IMR-90 (cell line): ENCODE measurements at regions of chr2 and their contacts with region 1.

Region 1: GRCh38 chr2:12057436-12058166 is 311.2 kb downstream of the LPIN1 start:
- DNase-seq: no peak
- ATAC-seq: no peak
- H3K4me3 ChIP-seq: no peak overlapping the region
- H3K27ac ChIP-seq: no peak overlapping the region
- H3K4me1 ChIP-seq: peaks cover 13% of the 10 kb centered on the region
- H3K27me3 ChIP-seq: no peaks in the 10 kb centered on the region
- CTCF ChIP-seq: no peak
- POLR2A ChIP-seq: no peak
- RAD21 ChIP-seq: no peak

Region 2: DNA sequence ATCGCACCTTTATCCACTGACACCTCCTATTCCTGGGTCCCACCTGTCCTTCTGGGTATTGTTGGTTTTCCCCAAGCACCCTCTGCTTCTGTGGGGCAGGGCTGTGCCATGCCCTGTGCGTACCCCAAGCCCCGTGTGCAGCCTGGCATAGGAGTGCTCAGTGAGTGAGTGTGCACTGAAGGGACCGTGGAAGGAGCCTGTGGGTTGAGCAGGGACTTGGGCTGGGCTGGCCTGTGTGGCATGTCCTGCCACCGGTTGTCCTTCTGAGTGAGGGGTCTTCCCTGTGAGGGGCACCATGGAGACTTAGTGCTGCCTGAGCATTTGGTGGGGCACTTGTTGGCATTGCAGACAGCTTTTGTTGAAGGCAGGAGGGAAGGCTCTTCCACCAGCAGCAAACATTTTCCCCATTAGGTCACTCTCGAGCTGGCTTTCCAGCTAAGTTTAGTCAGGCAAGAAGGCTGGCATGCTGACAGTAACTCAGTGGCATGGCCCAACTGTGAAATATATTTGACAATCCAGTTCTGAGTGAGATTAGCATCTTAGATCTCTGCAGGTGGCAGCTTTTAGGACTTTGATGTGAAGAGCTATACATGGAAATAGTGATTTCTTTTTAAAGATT is 246.5 kb before region 1 on chr2:
- CTCF ChIA-PET with region 1: no interaction called
- POLR2A ChIA-PET with region 1: no interaction called
- dilution Hi-C with region 1: no loop called
- in situ Hi-C with region 1: no loop called
- intact Hi-C with region 1: no loop called
- DNase-seq: no peak
- ATAC-seq: no peak
- H3K4me3 ChIP-seq: no peak overlapping the region
- H3K27ac ChIP-seq: no peak overlapping the region
- H3K4me1 ChIP-seq: peaks cover 2% of the 10 kb centered on the region; the same call in 1 of the 2 replicates
- H3K27me3 ChIP-seq: no peaks in the 10 kb centered on the region
- CTCF ChIP-seq: no peak
- POLR2A ChIP-seq: no peak
- RAD21 ChIP-seq: no peak

Region 3: GRCh38 chr2:12091201-12091806 is 33.7 kb after region 1 on chr2:
- CTCF ChIA-PET with region 1: no interaction called
- POLR2A ChIA-PET with region 1: no interaction called
- dilution Hi-C with region 1: no loop called
- in situ Hi-C with region 1: no loop called
- intact Hi-C with region 1: no loop called
- DNase-seq: no peak
- ATAC-seq: no peak
- H3K4me3 ChIP-seq: no peak overlapping the region
- H3K27ac ChIP-seq: no peak overlapping the region
- H3K4me1 ChIP-seq: no peaks in the 10 kb centered on the region
- H3K27me3 ChIP-seq: no peaks in the 10 kb centered on the region
- CTCF ChIP-seq: no peak
- POLR2A ChIP-seq: no peak
- RAD21 ChIP-seq: no peak

Region 4: DNA sequence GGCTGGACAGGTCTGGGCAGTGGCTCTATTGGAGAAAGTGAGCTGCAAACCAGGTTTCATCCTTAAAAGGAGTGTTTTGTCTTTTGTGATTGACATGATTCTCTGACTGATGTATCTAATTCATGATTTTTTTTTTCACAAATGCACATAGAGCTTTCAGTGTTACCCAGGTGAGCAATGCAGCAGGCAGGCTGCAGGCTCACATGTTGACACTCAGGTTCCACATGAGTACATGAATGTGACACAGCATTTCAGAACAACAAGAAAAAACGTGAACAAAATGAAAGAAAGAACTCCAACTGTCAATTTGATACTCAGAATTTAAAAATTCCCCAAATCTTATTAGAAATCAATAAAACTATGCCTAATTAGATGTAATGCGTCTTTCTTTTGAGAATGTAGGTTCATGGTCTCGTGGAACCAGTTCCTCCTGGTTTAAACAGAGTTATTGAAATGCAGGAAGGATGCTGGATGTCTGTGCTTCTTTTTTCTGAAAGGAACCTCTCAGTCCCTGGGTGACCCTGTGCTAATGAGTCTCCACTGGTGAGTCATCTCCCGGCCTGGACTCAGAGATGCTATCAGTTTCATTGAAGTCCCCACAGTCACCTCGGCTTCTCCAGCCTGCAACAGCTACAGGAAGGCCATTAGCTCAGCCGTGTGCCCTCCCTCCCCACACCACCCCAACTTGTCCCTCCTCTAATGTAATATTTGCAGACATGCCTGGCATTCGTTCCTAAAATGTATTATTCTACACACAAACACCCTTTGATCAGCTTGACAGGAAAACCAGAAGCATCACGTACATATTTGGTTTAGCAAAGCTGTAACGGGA is 119.2 kb after region 1 on chr2:
- CTCF ChIA-PET with region 1: no interaction called
- POLR2A ChIA-PET with region 1: no interaction called
- dilution Hi-C with region 1: no loop called
- in situ Hi-C with region 1: no loop called
- intact Hi-C with region 1: loop called (anchors 10 kb)
- DNase-seq: peak; percentile 76
- ATAC-seq: peak; percentile 87
- H3K4me3 ChIP-seq: no peak overlapping the region
- H3K27ac ChIP-seq: no peak overlapping the region; the same call in 1 of the 2 replicates
- H3K4me1 ChIP-seq: peaks cover 11% of the 10 kb centered on the region
- H3K27me3 ChIP-seq: no peaks in the 10 kb centered on the region
- CTCF ChIP-seq: no peak
- POLR2A ChIP-seq: no peak
- RAD21 ChIP-seq: no peak

Region 5: DNA sequence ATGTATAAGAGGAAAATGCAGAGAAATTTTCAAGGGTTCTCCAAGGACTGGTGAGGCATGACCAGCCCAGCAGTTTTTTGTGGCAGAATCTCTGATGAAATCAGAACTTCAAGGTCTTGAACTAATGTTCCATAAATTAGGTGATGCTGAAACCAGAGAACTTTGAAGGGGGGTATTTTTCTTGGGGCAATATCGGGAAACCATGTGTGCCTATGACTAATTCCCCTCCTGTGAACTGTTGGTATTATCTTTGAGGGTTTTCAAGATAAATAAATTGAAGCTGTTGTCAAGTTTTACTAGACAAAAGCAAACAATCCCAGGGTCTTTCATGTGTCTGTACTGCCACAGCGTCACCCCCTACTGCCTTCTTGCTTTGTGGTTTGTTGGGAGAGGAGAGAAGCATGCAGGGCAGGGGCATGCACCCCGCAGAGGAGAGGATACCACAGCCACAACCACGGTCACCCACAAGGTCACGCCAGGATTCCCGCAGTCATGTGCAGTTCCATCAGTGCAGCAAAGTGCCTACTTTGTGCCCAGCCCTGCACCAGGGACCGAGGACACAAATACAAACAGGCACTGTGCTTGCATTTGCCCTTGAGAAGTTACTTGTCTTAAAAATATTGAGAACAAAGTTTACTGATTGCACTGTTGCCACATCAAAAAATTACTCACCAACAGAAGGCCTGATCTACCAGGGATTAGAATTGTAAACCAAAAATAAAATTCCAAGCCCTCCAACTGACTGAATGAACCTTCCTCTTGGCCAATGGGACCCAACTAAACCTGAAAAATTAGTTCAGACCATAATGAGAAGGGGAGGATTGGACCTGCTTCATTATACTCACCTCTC is 245.8 kb after region 1 on chr2:
- CTCF ChIA-PET with region 1: no interaction called
- POLR2A ChIA-PET with region 1: no interaction called
- dilution Hi-C with region 1: no loop called
- in situ Hi-C with region 1: no loop called
- intact Hi-C with region 1: loop called (anchors 10 kb)
- DNase-seq: peak; percentile 83
- ATAC-seq: peak; percentile 69
- H3K4me3 ChIP-seq: no peak overlapping the region
- H3K27ac ChIP-seq: peak overlapping the region; percentile 53
- H3K4me1 ChIP-seq: peaks cover 15% of the 10 kb centered on the region
- H3K27me3 ChIP-seq: no peaks in the 10 kb centered on the region
- CTCF ChIP-seq: no peak
- POLR2A ChIP-seq: no peak
- RAD21 ChIP-seq: no peak; the same call in 1 of the 2 replicates

Region 6: GRCh38 chr2:12363569-12363968 is 306.0 kb after region 1 on chr2:
- CTCF ChIA-PET with region 1: no interaction called
- POLR2A ChIA-PET with region 1: no interaction called
- dilution Hi-C with region 1: no loop called
- in situ Hi-C with region 1: no loop called
- intact Hi-C with region 1: no loop called
- DNase-seq: no peak
- ATAC-seq: no peak
- H3K4me3 ChIP-seq: no peak overlapping the region
- H3K27ac ChIP-seq: no peak overlapping the region
- H3K4me1 ChIP-seq: no peaks in the 10 kb centered on the region; the same call in 1 of the 2 replicates
- H3K27me3 ChIP-seq: no peaks in the 10 kb centered on the region
- CTCF ChIP-seq: no peak
- POLR2A ChIP-seq: no peak
- RAD21 ChIP-seq: no peak

Region 7: DNA sequence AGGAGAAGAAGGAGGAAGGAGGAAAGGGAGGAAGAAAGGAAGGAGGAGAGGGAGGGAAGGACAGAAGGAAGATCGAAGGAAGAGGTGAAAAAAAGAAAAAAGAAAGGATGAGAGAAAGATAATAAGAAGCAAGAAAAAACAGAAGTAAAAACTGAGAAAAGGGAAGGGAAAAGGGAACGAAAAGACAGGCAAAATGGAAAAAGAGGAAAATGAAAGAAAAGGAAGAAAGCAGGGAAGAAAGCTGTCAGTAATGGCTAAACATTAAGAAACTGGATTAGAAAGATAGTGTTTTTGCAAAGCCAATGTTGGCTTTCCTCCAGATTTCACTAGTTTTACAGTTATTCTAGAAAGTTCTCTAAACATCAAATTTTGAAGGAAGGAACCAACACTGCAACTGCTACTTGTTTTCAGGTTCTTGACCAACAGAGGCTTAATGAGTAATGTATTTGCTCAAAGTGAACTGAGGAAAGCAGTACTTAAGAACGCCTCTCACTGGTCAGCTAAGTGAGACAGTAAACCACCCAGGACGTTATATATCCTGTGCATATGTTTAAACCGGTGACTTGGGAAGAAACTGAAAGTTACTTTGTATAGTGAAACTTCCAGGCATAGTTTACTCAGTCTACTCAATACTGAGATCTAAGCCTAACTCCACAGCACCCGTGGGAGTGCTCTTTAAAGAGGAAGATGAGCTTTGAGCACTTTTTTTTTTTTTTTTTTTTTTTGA is 373.0 kb after region 1 on chr2:
- CTCF ChIA-PET with region 1: interaction called, 4 read pairs
- POLR2A ChIA-PET with region 1: no interaction called
- dilution Hi-C with region 1: no loop called
- in situ Hi-C with region 1: no loop called
- intact Hi-C with region 1: loop called (anchors 10 kb)
- DNase-seq: peak; percentile 61
- ATAC-seq: no peak
- H3K4me3 ChIP-seq: no peak overlapping the region
- H3K27ac ChIP-seq: peak overlapping the region; percentile 95; the same call in 1 of the 2 replicates
- H3K4me1 ChIP-seq: peaks cover 23% of the 10 kb centered on the region
- H3K27me3 ChIP-seq: no peaks in the 10 kb centered on the region
- CTCF ChIP-seq: no peak
- POLR2A ChIP-seq: no peak
- RAD21 ChIP-seq: no peak